Activated T-helper 1 cell treated with anti-CD3 and anti-CD28 coated beads, Interleukin-12 subunit alpha, Interleukin-12 subunit beta, Interleukin-2, Interleukin-4 antibody, amounts not matched to agents 30 ng/mL and 10 ng/mL and 1 ng/mL, durations not matched to agents 14 hours and 24 hours and 36 hours (primary cell): ENCODE measurements at regions of chr19 and their contacts with region 1.

Region 1: DNA sequence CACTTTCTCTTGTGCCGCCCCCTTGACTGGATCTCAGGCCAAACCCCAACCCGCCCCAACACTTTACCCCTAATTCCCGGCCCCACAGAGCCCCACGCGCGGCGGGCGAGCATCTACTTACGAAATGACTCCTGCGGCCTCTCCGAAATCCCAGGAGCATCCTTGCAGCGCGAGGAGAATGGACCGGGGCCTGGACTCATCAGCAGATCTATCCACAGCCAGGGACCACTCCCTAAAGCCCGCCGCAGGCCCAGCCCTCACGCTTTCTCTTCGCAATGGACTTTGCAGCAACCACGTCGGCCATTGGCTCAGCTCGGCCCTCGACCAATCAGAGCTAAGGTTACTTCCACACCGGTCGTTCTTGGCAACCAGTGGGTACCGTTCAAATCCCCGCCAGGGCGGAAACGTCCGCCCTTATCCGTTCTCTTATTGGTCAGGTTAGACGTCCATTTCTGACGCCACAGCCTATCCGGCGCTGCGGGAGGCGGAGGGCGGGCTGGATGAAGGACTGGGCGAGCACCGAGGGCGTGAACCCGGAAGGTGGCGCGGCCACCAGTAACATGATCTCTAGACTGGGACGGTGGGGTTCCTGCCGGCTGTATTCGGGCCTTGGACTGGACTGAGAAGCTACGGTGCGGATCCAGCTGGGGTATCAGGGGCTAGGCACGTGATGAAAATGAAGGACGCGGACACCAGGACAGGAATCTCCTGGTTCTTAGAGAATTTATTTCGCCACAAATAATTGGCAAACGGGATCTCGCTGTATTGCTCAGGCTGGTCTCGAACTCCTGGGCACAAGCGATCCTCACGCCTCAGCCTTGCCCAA is at the starts of genes CEP89 and FAAP24:
- DNase-seq: peak; percentile 98
- H3K4me3 Mint-ChIP-seq: peak within 1 kb of the TSS; percentile 96
- H3K27ac Mint-ChIP-seq: peak within 1 kb of the TSS; percentile 86
- H3K4me1 Mint-ChIP-seq: peaks cover 15% of the 10 kb centered on the region
- H3K27me3 Mint-ChIP-seq: no peaks in the 10 kb centered on the region
- total RNA-seq, gene CEP89: 15.5 and 17.2 TPM in 2 replicates
- total RNA-seq, gene FAAP24: 10.7 and 11.2 TPM in 2 replicates

Region 2: GRCh38 chr19:32405431-32406161 is 566.3 kb before region 1 on chr19 and contains the start of gene DPY19L3:
- intact Hi-C with region 1: loop called (anchors 5 kb)
- DNase-seq: peak; percentile 89
- H3K4me3 Mint-ChIP-seq: peak within 1 kb of the TSS; percentile 90
- H3K27ac Mint-ChIP-seq: peak within 1 kb of the TSS; percentile 88
- H3K4me1 Mint-ChIP-seq: peaks cover 17% of the 10 kb centered on the region
- H3K27me3 Mint-ChIP-seq: peaks cover 5% of the 10 kb centered on the region
- total RNA-seq, gene DPY19L3: 11.9 and 16.5 TPM in 2 replicates

Region 3: DNA sequence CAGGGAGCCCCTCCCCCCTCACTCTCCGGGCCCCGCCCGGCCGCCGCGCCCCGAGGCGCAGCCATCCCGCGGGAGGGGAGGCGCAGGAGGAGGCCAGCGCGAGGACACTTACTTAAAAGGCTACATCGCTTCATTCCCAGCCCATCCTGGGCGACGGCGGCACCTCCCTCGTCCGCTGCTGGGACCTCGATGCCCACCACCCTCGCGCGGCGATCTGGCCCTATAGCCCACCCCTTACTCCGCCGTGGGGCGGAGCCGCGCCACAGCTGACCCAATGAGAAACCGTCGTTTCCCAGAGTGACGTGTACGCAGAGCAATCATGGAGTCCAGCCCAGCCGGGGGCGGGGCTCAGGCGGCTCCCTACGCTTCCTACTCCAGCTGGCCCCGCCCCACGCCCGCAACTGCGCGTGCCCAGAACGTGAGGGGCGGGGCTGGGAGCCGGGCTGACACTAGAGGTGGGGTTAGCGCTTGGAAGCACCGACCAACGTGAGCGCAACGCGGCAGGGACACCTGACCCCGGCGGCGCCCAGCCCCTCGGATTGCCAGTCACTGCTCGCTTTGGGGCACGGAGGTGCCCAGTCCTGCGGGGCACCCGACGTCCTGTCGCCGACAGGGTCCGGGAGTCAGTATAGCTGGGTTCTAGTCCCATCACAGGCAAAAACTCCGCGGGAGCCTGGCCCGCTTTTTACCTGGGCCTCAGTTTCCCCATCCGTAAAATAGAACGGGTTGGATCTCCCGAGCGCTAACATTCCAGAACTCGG is 296.8 kb before region 1 on chr19 and contains the start of gene ANKRD27:
- intact Hi-C with region 1: loop called (anchors 1 kb)
- DNase-seq: peak; percentile 98
- H3K4me3 Mint-ChIP-seq: peak within 1 kb of the TSS; percentile 89
- H3K27ac Mint-ChIP-seq: peak within 1 kb of the TSS; percentile 89
- H3K4me1 Mint-ChIP-seq: peaks cover 28% of the 10 kb centered on the region
- H3K27me3 Mint-ChIP-seq: peaks cover 31% of the 10 kb centered on the region
- total RNA-seq, gene ANKRD27: 28.2 and 28.7 TPM in 2 replicates

Region 4: DNA sequence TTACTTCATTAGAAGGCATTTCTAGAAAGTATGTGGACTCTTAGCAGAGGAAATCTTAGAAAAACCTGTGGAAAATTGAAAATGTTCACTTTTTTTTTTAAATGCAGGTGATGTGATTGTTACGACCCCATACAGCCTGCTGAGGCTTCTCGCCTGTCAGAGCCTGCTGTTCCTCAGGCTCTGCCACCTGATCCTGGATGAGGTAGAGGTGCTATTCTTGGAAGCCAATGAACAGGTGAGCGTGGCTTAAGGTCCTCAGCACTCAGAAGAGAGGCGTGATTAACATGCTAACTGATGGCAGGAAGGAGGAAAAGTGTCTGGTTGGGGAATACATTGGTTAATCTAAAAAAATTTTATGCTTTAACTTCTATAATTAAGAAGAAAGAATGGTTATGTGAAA is 173.7 kb before region 1 on chr19:
- intact Hi-C with region 1: loop called (anchors 10 kb)
- DNase-seq: no peak
- H3K4me3 Mint-ChIP-seq: no peak overlapping the region
- H3K27ac Mint-ChIP-seq: no peak overlapping the region
- H3K4me1 Mint-ChIP-seq: peaks cover 23% of the 10 kb centered on the region
- H3K27me3 Mint-ChIP-seq: no peaks in the 10 kb centered on the region

Region 5: GRCh38 chr19:33064792-33065550 is 93.0 kb after region 1 on chr19 and contains the start of gene RHPN2:
- intact Hi-C with region 1: loop called (anchors 5 kb)
- DNase-seq: peak; percentile 25
- H3K4me3 Mint-ChIP-seq: peak within 1 kb of the TSS; percentile 65
- H3K27ac Mint-ChIP-seq: no peak within 1 kb of the TSS
- H3K4me1 Mint-ChIP-seq: no peaks in the 10 kb centered on the region
- H3K27me3 Mint-ChIP-seq: peaks cover 22% of the 10 kb centered on the region
- total RNA-seq, gene RHPN2: 2.5 and 2.6 TPM in 2 replicates

Region 6: DNA sequence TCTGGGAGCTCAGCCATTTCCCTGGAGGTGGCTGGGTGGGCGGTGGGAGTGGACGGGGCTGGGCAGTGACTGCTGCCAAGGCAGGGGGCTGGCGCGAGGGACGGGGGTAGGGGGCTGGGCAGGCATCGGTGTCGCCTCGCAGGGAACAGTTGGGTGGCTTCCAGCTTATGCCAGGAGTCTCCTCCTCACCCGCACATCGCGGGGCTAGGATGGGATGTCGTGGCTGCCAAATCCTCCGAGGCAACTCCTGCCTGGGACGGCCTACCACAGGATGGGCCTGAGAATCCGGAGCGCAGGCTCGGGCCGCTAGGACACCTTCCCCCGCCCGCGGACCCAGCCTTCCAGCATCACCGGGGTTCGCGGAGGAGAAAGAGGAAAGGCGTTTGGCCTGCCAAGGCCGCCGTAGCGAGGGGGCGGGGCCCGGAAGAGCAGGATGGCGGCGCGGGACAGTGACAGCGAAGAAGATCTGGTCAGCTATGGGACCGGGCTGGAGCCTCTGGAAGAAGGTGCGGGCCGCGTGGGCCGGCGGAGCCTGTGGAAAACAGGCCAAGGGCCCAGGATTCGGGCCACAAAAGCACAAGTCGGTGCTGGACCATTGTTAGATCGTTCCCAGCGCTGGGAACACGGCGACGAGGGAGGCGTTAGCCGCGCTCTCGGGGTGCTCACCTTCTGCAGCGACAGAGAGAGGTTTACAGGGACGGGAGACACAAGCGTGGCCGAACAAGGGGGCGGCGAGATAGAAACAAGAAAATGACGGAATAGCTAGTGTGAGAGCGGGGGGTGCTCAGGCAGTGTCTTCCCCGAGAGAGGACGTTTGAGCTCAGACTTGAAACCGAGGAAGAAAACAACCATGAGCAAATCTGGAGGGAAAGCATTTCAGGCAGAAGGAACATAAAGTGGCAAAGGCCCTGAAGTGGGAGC is 109.1 kb after region 1 on chr19 and contains the start of gene GPATCH1:
- intact Hi-C with region 1: loop called (anchors 1 kb)
- DNase-seq: peak; percentile 85
- H3K4me3 Mint-ChIP-seq: peak within 1 kb of the TSS; percentile 98
- H3K27ac Mint-ChIP-seq: peak within 1 kb of the TSS; percentile 90
- H3K4me1 Mint-ChIP-seq: peaks cover 31% of the 10 kb centered on the region
- H3K27me3 Mint-ChIP-seq: no peaks in the 10 kb centered on the region
- total RNA-seq, gene GPATCH1: 11.1 and 13.5 TPM in 2 replicates

Region 7: DNA sequence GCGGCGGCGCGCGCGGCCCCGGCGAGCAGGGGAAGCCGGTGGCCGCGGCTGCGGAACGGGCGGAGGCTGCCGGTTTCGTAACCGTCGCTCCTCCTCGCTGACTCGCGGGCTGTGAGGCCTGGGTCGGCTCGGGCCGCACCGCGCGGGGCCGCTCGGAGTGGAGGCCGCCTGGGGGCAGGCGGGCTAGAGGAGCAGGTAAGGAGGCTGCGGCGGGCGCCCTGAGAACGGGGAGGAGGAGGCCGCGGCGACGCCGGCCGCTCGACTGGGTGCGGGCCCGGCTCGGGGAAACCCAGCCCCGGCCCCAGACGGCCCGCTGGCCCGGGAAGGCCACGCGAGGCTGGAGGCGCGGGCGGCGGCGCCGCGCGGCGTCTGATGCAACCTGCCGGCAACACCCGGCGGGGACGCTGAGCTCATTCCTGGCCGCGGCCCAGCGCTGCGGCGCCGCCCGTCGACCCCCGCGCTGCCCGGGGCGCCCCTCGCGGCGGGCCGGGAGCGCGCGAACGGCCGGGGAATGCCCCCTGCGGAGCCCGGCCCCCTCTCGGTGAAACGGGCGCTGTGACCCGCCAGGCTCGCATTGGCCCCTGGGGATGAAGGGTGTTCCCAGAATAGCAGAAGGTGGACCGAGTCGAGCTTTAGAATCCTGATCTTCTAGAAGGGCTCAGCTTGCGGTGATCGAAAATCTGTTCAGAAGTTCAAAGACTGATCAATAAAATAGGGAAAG is 401.9 kb after region 1 on chr19 and contains the start of gene CEBPG:
- intact Hi-C with region 1: loop called (anchors 1 kb)
- DNase-seq: peak; percentile 60
- H3K4me3 Mint-ChIP-seq: peak within 1 kb of the TSS; percentile 93
- H3K27ac Mint-ChIP-seq: peak within 1 kb of the TSS; percentile 69
- H3K4me1 Mint-ChIP-seq: peaks cover 39% of the 10 kb centered on the region
- H3K27me3 Mint-ChIP-seq: no peaks in the 10 kb centered on the region
- total RNA-seq, gene CEBPG: 30.4 and 31.3 TPM in 2 replicates

Region 8: DNA sequence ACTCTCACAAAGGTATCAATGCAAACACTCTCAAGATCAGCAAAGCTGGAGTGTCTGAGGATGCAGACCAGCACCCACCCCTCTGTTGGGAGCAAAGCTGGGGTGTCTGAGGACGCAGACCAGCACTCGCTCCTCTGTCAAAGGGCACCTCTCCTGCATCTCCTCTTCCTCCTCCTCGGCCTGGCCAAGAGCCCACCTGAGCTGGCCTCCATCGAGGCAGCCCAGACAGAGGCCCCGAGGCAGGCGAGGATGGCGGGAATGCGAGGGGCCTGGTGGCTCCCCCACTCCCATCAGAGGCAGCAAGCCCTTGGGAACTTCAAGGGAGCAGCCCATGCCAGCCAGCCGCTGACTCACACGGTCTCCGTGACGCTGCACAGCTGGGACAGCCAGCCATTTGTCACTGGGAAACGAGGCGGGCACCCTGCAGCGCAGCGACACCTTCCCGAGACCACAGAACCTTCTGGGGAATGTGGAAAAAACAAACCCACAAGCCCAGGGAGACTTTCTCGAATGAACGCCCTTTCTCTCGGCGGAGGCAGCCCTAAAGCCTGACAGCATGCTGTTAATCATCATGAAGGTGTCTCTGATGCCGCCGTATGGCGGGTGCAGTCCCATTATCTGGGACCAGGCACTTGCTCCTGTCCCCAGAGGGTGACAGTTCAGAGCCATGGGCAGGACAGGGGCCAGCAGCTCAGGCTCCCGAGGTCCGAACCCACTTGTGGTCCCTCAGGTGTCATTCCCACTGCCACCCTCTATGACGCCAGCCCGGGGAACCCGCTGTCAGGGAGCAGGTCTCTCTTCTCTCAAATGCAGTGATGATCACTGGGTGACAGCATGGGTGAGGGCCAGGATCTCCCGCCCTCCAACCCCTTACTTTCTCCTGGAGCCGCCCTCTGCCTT is 496.6 kb after region 1 on chr19:
- intact Hi-C with region 1: no loop called
- DNase-seq: no peak
- H3K4me3 Mint-ChIP-seq: no peak overlapping the region
- H3K27ac Mint-ChIP-seq: no peak overlapping the region
- H3K4me1 Mint-ChIP-seq: no peaks in the 10 kb centered on the region
- H3K27me3 Mint-ChIP-seq: no peaks in the 10 kb centered on the region